ENCODE measurements at regions of chr3 and their contacts with region 1.

Region 1: GRCh38 chr3:182717216-182717615 is 76.1 kb upstream of the ATP11B start:
- DNase-seq: no peak
- ATAC-seq: no peak
- H3K4me3 Mint-ChIP-seq: no peak overlapping the region
- H3K27ac Mint-ChIP-seq: no peak overlapping the region
- H3K4me1 Mint-ChIP-seq: peaks cover 18% of the 10 kb centered on the region
- H3K27me3 Mint-ChIP-seq: peaks cover 3% of the 10 kb centered on the region

Region 2: GRCh38 chr3:182792901-182793662 is 75.9 kb after region 1 on chr3 and contains the start of gene ATP11B:
- POLR2A ChIA-PET with region 1: interaction called, 10 read pairs
- DNase-seq: peak; percentile 93
- ATAC-seq: peak; percentile 69
- H3K4me3 Mint-ChIP-seq: peak within 1 kb of the TSS; percentile 98
- H3K27ac Mint-ChIP-seq: peak within 1 kb of the TSS; percentile 99
- H3K4me1 Mint-ChIP-seq: peaks cover 22% of the 10 kb centered on the region
- H3K27me3 Mint-ChIP-seq: no peaks in the 10 kb centered on the region
- total RNA-seq, gene ATP11B: 125 to 136 TPM